Activated CD4-positive, alpha-beta T cell treated with anti-CD3 and anti-CD28 coated beads for 36 hours (primary cell): ENCODE measurements at regions of chr16 and their contacts with region 1.

Region 1: DNA sequence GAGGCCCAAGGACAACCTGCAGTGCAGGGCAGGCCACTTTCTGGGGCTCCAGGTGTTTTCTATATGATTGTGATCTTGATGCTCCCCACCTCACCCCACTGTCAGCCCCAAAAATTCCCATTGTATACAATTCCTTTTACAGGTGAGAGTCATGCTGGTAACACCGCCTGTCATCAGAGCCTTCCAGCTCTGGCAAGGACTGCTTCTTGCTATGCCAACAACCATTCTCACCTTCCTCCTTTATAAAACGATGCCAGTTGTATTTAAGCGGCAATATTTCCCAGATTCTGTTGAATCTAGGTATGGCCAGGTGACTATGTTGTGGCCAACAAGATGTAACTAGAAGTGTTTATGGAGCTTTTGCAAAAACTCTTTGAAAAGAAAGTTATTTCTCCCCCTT is 30.4 kb upstream of the CALB2 start:
- DNase-seq: no peak
- ATAC-seq: no peak
- H3K4me3 Mint-ChIP-seq: no peak overlapping the region
- H3K27ac Mint-ChIP-seq: no peak overlapping the region
- H3K4me1 Mint-ChIP-seq: no peaks in the 10 kb centered on the region
- H3K27me3 Mint-ChIP-seq: peaks cover 13% of the 10 kb centered on the region

Region 2: GRCh38 chr16:71311553-71312158 is 16.5 kb before region 1 on chr16:
- CTCF ChIA-PET with region 1: interaction called, 11 read pairs
- POLR2A ChIA-PET with region 1: no interaction called
- intact Hi-C with region 1: no loop called
- DNase-seq: peak; percentile 31
- ATAC-seq: no peak
- H3K4me3 Mint-ChIP-seq: no peak overlapping the region
- H3K27ac Mint-ChIP-seq: no peak overlapping the region
- H3K4me1 Mint-ChIP-seq: no peaks in the 10 kb centered on the region
- H3K27me3 Mint-ChIP-seq: peaks cover 35% of the 10 kb centered on the region

Region 3: GRCh38 chr16:71396594-71396993 is 68.4 kb after region 1 on chr16:
- CTCF ChIA-PET with region 1: no interaction called
- POLR2A ChIA-PET with region 1: no interaction called
- intact Hi-C with region 1: no loop called
- DNase-seq: no peak
- ATAC-seq: no peak
- H3K4me3 Mint-ChIP-seq: no peak overlapping the region
- H3K27ac Mint-ChIP-seq: no peak overlapping the region
- H3K4me1 Mint-ChIP-seq: no peaks in the 10 kb centered on the region
- H3K27me3 Mint-ChIP-seq: peaks cover 6% of the 10 kb centered on the region

Region 4: DNA sequence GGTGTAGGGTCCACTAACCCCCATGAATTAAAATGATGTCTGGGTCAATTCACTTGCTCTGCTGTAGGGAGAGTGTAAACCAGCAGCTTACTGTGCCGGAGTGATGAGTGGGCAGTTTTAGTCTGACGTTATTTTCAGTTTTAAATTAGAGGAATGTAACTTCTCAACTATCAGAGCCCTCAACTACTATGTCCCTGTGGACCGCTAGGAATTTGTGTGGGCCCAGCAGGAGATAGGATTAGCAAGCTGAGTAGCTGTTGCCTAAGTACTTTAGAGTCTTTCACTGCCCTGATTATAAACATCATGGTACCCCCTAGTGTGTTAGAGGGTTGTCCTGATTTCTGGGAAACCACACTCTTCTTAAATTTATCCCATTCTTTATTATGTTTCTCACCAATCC is 309.2 kb after region 1 on chr16:
- CTCF ChIA-PET with region 1: no interaction called
- POLR2A ChIA-PET with region 1: no interaction called
- intact Hi-C with region 1: no loop called
- DNase-seq: no peak
- ATAC-seq: no peak
- H3K4me3 Mint-ChIP-seq: no peak overlapping the region
- H3K27ac Mint-ChIP-seq: no peak overlapping the region
- H3K4me1 Mint-ChIP-seq: no peaks in the 10 kb centered on the region
- H3K27me3 Mint-ChIP-seq: no peaks in the 10 kb centered on the region